ENCODE measurements at regions of chr6 and their contacts with region 1.

Region 1: GRCh38 chr6:45377554-45378333 is at the start of gene SUPT3H:
- DNase-seq: peak; percentile 74 to 94 (median 88)
- H3K4me3 ChIP-seq: peak within 1 kb of the TSS; percentile 62 to 96 (median 84)
- H3K27ac ChIP-seq: peak within 1 kb of the TSS; percentile 58 to 98 (median 93)
- H3K27me3 ChIP-seq: no peaks in the 10 kb centered on the region
- CTCF ChIP-seq: peak in 50 of 56 donors; percentile 8 to 60 (median 35)
- total RNA-seq, gene SUPT3H: 19.4 to 51.1 (median 30.3) TPM

Region 2: GRCh38 chr6:45479834-45480751 is 102.3 kb after region 1 on chr6:
- intact Hi-C with region 1: loop called in 1 of 2 experiments (anchors 5 kb)
- DNase-seq: no peak
- H3K4me3 ChIP-seq: peak overlapping the region in 53 of 59 donors; percentile 3 to 65 (median 43)
- H3K27ac ChIP-seq: peak overlapping the region in 47 of 59 donors; percentile 5 to 97 (median 69)
- H3K27me3 ChIP-seq: no peaks in the 10 kb centered on the region
- CTCF ChIP-seq: no peak